ENCODE measurements at regions of chr12 and their contacts with region 1.

Region 1: DNA sequence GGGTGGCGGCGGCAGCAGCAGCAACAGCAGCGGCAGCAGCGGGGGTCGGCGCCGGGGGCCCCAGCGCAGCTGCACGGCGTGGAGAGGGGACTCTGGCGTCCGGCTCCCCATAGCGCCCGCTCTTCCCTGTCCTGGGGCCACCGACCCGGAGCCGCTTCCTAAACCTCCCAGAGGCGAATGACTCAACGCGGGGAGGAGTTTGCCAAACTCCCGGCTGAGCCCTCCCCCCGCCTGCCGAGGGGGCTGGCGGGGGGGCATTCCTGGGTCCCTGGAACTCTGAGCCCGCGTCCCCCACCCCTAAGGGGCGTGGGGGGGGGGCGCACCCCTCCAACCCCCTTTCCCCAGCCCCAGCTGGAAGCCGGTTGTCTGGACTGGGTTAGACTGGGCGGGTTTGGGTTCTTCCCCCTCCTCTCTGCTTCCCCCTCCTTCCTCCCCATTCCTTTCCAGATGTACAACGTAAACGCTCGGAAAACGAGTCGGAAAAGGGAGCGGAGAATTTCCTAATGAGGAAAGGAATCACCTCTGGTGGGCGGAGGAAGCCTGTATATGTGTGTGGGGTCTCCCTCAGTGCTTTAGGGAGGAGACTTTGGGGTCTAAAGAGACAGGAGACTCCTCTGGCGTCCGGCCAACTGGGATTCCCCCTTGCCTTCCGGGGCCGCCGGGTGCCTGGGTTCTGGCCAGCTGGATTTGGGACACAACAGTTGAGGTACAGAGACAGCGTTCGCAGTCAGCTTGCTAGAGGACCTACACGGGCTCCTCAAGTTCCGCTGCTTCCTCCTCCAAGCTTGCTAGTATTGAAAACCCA is at the start of gene ITGA5:
- DNase-seq: peak; percentile 62
- ATAC-seq: peak; percentile 40
- H3K4me3 Mint-ChIP-seq: peak within 1 kb of the TSS; percentile 84
- H3K27ac Mint-ChIP-seq: no peak within 1 kb of the TSS
- H3K4me1 Mint-ChIP-seq: peaks cover 34% of the 10 kb centered on the region
- H3K27me3 Mint-ChIP-seq: peaks cover 63% of the 10 kb centered on the region
- CTCF ChIP-seq: no peak
- total RNA-seq, gene ITGA5: 19.3 to 21.9 TPM (median 20.8 TPM) in 3 replicates

Region 2: DNA sequence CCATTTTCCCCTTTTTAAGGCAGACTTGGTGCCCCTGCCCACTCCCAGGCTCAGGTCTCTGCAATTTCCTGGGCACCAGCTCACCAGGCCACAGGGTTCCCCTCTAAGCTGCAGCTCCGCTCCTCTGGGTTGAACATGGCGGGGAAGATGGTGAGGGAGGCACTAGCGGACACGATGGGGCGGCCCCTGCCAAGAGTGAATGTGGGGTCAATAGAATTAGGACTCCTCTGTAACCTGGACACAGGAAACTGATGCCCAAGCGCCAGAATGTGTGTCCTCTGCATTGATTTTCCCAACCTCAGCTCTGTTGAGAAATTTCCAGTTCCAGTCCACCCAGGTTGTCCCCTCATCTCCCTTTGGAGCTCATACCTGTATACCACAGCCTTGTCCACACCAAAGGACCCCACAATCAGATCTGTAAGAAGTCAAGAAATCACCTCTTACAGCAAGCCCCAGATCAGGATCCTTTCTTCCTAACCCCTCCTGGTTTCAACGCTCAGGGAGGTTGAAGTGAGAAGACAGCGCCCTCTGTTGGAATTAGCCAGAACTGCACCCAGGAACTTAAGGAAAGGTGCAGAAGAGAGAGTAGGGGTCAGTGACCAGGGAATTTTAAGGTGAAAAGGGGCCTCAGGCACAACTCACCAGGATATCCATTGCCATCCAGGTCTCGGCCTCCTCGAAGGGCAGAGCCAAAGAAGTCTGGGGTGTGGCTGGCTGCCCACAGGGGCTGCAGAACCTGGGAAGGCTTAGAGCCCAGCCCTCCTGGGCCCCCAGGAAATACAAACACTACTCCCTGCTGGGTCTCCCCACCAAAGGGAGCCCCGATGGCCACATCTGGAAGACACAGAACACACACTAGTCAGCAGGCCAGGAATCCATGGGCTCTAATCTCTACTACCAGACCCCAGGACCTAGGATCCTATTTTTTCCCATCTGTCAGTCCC is 15.0 kb before region 1 on chr12:
- CTCF ChIA-PET with region 1: interaction called, 230 read pairs
- POLR2A ChIA-PET with region 1: interaction called, 4 read pairs
- DNase-seq: peak; percentile 92
- ATAC-seq: peak; percentile 79
- H3K4me3 Mint-ChIP-seq: no peak overlapping the region
- H3K27ac Mint-ChIP-seq: no peak overlapping the region
- H3K4me1 Mint-ChIP-seq: peaks cover 6% of the 10 kb centered on the region; the same call in 1 of the 2 replicates
- H3K27me3 Mint-ChIP-seq: no peaks in the 10 kb centered on the region
- CTCF ChIP-seq: peak; percentile 100

Region 3: GRCh38 chr12:54549774-54550451 is 130.6 kb after region 1 on chr12:
- CTCF ChIA-PET with region 1: no interaction called
- POLR2A ChIA-PET with region 1: no interaction called
- DNase-seq: peak; percentile 42
- ATAC-seq: peak; percentile 69
- H3K4me3 Mint-ChIP-seq: peak overlapping the region; percentile 74
- H3K27ac Mint-ChIP-seq: no peak overlapping the region
- H3K4me1 Mint-ChIP-seq: peaks cover 27% of the 10 kb centered on the region
- H3K27me3 Mint-ChIP-seq: no peaks in the 10 kb centered on the region; the same call in 1 of the 2 replicates
- CTCF ChIP-seq: no peak

Measured in WTC11 (cell line).